H1 (cell line): ENCODE measurements at regions of chr4 and their contacts with region 1.

Region 1: GRCh38 chr4:40908702-40909362 is 159.1 kb downstream of the NSUN7 start:
- DNase-seq: peak; percentile 69 to 88
- H3K4me3 ChIP-seq: no peak overlapping the region
- H3K27ac ChIP-seq: no peak overlapping the region
- H3K4me1 ChIP-seq: peaks cover 0 to 7% (median 4%) of the 10 kb centered on the region in 4 experiments; a peak in 5 of 7 replicates
- H3K27me3 ChIP-seq: no peaks in the 10 kb centered on the region
- CTCF ChIP-seq: peak; percentile 98 to 100 (median 99)
- EP300 ChIP-seq: no peak
- POLR2A ChIP-seq: no peak
- RAD21 ChIP-seq: peak; percentile 87 to 90

Region 2: DNA sequence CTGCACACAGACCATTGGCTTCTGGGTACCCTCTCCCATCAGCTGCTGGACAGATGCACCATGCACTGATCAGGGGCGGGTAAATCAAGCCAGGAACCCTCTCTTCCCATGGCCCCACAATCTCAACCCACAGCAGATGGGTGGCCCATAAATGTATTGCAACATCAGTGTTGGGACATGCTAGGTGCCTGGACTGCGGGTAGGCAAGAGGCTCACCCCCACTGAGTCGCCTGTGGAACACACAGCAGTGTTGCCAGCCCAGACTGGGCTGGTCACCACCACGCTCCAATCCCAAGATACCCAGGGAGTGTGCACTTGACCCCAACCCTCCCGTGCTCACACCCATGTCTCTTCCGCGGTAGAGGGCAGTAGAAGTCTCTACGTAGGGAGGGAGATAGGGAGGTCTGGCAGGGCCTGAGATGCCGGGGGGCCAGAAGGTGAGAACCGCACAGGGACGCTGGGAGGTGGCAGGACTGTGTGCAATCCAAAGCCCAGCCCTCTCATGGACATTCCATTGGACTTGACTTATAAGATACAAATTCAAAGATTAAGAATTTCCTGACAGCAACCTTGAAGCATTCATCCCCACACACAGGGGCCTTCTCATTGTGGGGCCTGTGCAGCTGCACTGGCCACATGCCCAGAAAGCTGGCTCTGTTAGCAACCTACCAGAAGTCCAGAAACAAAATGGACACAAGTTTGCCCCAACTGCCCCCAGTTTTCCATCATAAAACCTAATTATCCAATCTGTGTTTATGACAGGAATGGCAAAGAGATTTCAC is 24.6 kb after region 1 on chr4:
- CTCF ChIA-PET with region 1: interaction called, 28 read pairs
- POLR2A ChIA-PET with region 1: no interaction called
- DNase-seq: no peak
- H3K4me3 ChIP-seq: no peak overlapping the region
- H3K27ac ChIP-seq: no peak overlapping the region
- H3K4me1 ChIP-seq: peaks cover 5 to 16% (median 13%) of the 10 kb centered on the region in 4 experiments; a peak in 5 of 7 replicates
- H3K27me3 ChIP-seq: no peaks in the 10 kb centered on the region
- CTCF ChIP-seq: no peak
- EP300 ChIP-seq: no peak
- POLR2A ChIP-seq: no peak
- RAD21 ChIP-seq: no peak

Region 3: GRCh38 chr4:41214136-41214824 is 305.4 kb after region 1 on chr4 and contains the start of gene APBB2:
- CTCF ChIA-PET with region 1: interaction called, 10 read pairs
- POLR2A ChIA-PET with region 1: interaction called, 4 read pairs
- DNase-seq: peak; percentile 94 to 95
- H3K4me3 ChIP-seq: peak within 1 kb of the TSS; percentile 55 to 88 (median 85)
- H3K27ac ChIP-seq: 0 out of 2 replicates have a peak within 1 kb of the TSS, but pooled peaks have one; percentile 48
- H3K4me1 ChIP-seq: peaks cover 3 to 12% (median 6%) of the 10 kb centered on the region in 4 experiments; a peak in 6 of 7 replicates
- H3K27me3 ChIP-seq: no peaks in the 10 kb centered on the region; a peak in 1 of 7 replicates
- CTCF ChIP-seq: peak; percentile 67 to 93 (median 70)
- EP300 ChIP-seq: no peak
- POLR2A ChIP-seq: peak in 1 of 2 experiments; percentile 83; a peak in 2 of 3 replicates
- RAD21 ChIP-seq: peak; percentile 74 to 75
- total RNA-seq, gene APBB2: 59.4 and 64.0 TPM in 2 replicates